ENCODE measurements at regions of chr5 and their contacts with region 1.

Region 1: DNA sequence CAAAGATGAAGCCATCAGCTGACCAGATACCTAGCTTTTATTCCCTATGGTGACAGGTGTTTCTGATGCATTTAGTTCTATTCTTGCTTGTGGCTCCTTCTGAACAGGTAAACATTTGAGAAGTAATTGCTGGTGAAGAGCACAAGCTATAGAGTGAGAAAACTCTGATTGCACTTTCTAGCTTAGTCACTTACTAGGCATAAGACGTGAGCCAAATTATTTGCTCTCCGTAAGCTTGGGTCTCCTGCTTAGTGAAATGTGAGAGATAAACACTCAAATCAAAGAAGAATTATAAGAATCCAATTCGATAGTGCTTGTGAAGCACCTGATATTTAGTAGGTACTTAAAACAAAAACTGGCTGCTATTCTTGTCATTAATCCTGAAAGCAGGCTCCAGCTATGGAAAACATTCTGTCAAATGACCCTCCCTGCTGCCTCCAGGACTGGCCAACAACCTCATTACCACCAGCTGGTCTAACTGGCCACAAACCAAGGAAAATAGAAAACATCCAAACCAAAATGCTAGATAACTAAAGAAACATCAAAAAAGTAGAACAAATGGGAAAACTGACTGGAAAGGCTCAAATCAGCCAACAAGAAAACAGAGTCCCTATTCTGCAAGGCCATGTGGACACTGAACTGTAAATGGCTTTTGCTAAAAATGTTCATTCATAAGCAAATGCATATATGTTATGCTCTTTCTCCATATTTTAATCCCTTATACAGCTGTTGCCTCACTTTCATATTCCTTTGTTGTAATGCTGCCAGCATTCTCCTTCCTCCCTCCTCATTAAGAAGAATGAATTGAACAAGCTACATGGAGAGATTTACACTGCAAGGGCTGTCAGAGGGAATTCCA is 616.1 kb downstream of the DTWD2 start:
- DNase-seq: peak in 1 of 2 donors; percentile 36
- ATAC-seq: peak in 7 of 8 donors; percentile 55 to 87 (median 70)
- H3K4me3 ChIP-seq: no peak overlapping the region
- H3K27ac ChIP-seq: peak overlapping the region in 1 of 10 donors; percentile 23
- H3K4me1 ChIP-seq: peaks cover 4 to 37% (median 16%) of the 10 kb centered on the region in 9 donors
- H3K27me3 ChIP-seq: no peaks in the 10 kb centered on the region
- CTCF ChIP-seq: no peak

Region 2: DNA sequence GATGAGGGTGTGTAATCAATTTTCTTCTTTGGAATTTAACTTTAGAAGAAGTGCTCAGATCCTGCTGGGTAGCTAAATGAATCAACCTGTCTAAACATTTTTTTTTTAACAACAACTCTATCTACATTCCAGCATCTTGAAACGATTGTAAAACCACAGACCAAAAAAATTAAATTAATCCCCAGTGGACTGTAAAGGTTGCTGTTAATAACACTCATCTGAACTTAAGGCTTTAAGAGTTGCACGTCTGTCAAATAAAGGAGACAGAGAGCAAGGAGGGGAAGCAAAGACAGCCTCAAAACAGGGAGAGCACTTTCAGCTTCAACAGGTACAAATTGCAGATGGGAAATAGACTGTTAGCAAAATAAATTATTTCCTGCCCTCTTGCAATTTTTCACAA is 67.6 kb after region 1 on chr5:
- intact Hi-C with region 1: loop called in 1 of 10 experiments (anchors 5 kb)
- DNase-seq: no peak
- ATAC-seq: no peak
- H3K4me3 ChIP-seq: no peak overlapping the region
- H3K27ac ChIP-seq: no peak overlapping the region
- H3K4me1 ChIP-seq: peaks cover 0 to 10% (median 4%) of the 10 kb centered on the region in 9 donors
- H3K27me3 ChIP-seq: no peaks in the 10 kb centered on the region
- CTCF ChIP-seq: no peak

Measured in heart right ventricle (tissue), 16 donors.